Caco-2 (cell line): ENCODE measurements at regions of chr3 and their contacts with region 1.

Region 1: GRCh38 chr3:129003578-129004160 is 2.6 kb downstream of the EFCC1 start:
- DNase-seq: peak; percentile 78 to 89
- H3K4me3 ChIP-seq: peak overlapping the region; percentile 56
- H3K4me3 Mint-ChIP-seq: peak overlapping the region; percentile 75
- H3K27ac Mint-ChIP-seq: peak overlapping the region; percentile 82
- H3K4me1 ChIP-seq: no peaks in the 10 kb centered on the region
- H3K4me1 Mint-ChIP-seq: peaks cover 21% of the 10 kb centered on the region
- H3K27me3 ChIP-seq: no peaks in the 10 kb centered on the region
- H3K27me3 Mint-ChIP-seq: no peaks in the 10 kb centered on the region
- CTCF ChIP-seq: peak in 1 of 2 experiments; percentile 50

Region 2: DNA sequence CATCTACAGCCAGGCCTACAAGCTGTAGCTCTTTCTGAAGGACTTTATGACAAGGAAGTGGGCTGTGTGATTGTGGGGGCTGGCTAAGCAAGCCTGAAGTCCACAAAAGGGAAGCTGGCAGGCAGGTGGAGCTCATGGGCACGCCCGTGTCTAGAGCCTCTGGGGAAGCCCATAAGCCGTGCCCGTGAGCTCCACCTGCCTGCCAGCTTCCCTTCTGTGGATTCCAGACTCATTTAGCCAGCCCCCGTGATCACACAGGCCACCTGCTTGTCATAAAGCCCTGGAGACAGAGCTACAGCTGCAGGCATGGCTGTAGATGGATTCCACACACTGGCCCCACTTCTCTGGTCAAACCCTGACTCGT is 12.7 kb after region 1 on chr3:
- CTCF ChIA-PET with region 1: interaction called, 11 read pairs
- POLR2A ChIA-PET with region 1: no interaction called
- intact Hi-C with region 1: no loop called
- DNase-seq: peak in 1 of 2 experiments; percentile 30
- H3K4me3 ChIP-seq: no peak overlapping the region
- H3K4me3 Mint-ChIP-seq: no peak overlapping the region
- H3K27ac Mint-ChIP-seq: no peak overlapping the region
- H3K4me1 ChIP-seq: peaks cover 11% of the 10 kb centered on the region; the same call in 1 of the 2 replicates
- H3K4me1 Mint-ChIP-seq: no peaks in the 10 kb centered on the region
- H3K27me3 ChIP-seq: no peaks in the 10 kb centered on the region
- H3K27me3 Mint-ChIP-seq: no peaks in the 10 kb centered on the region
- CTCF ChIP-seq: no peak

Region 3: DNA sequence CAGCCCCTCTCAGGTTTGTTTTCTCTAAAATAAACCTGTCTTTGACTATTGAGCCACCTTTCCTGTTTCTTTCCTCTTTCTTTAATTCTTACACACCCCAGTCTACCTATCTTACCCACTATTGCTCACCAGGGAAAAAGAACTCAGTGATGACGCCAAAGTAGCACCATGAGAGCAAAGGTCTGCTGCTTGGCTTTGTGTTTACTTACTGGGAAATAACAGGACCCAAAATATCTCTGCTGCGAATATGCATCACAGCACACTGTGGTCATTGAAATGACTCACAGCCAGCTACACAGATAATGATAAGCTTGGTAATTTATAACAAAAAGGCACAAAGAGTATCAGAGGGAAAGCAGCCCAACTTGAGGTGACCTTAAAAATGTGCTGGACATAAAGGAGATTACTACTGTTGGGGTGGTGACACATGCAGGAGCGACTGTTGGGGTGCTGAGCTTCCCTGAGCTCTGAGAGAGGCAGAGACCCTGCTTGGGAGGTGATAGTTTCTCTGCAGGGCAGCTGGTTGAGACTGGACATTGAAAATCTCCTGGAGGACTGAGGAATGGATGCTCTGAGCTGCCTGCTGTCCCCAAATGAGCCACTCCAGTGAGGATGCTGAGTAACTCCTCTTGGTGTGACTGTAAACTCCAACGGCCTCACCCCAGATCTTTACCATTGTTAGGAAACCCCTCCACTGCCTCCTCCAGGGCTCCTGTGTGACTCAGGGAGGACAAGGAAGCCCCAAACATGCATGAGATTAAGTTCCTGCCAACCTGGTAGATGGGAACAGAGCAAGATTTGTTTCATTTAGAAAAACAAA is 410.2 kb after region 1 on chr3:
- CTCF ChIA-PET with region 1: no interaction called
- POLR2A ChIA-PET with region 1: no interaction called
- intact Hi-C with region 1: no loop called
- DNase-seq: peak in 1 of 2 experiments; percentile 35
- H3K4me3 ChIP-seq: no peak overlapping the region
- H3K4me3 Mint-ChIP-seq: no peak overlapping the region
- H3K27ac Mint-ChIP-seq: peak overlapping the region; percentile 23
- H3K4me1 ChIP-seq: peaks cover 19% of the 10 kb centered on the region
- H3K4me1 Mint-ChIP-seq: peaks cover 17% of the 10 kb centered on the region
- H3K27me3 ChIP-seq: no peaks in the 10 kb centered on the region
- H3K27me3 Mint-ChIP-seq: no peaks in the 10 kb centered on the region
- CTCF ChIP-seq: no peak